AG04449 (cell line): ENCODE measurements at regions of chr1 and their contacts with region 1.

Region 1: DNA sequence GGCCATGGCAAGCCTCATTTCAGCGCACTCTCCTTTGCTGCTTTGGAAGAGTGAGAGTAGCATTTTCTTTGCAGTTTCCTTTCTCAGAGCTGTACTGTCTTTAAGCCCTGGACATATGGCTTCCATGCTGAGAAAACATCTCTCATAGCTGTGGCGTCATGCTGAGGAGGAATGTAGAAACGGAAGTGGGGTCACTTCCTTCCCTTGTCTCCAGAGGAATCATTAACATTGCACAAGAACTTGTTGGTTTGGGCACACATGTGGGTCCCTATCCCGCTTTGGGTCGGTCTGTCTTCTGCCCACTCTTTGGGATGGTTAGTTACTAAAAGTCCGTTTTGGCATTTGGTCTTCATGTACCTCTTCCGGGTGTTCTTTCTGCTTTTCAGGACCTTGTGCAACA is 5.6 kb downstream of the MFN2 start:
- DNase-seq: peak; percentile 70
- H3K4me3 ChIP-seq: no peak overlapping the region
- CTCF ChIP-seq: no peak

Region 2: DNA sequence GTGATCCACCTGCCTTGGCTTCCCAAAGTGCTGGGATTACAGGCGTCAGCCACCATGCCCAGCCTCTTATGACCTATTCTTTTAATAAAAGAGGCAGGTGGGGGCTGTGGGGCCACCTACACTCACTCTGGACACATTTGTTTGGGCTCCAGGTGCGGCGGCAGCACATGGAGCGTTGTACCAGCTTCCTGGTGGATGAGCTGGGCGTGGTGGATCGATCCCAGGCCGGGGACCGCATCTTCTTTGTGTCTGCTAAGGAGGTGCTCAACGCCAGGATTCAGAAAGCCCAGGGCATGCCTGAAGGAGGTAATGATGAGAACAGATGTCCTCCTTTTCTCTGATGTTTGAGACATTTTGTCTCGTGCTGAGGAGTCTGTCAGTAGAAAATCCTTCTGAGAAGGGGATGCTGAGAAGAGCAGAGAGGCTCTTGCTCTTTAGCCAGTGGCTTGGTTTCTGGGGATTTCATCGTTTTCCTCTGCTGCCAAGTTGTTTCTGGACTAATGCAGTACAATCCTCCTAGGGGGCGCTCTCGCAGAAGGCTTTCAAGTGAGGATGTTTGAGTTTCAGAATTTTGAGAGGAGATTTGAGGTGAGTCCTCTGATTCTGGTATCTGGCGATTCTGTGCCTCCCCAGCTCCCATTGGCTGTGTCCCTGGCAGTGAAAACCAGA is 15.5 kb after region 1 on chr1:
- CTCF ChIA-PET with region 1: interaction called, 25 read pairs
- POLR2A ChIA-PET with region 1: no interaction called
- DNase-seq: no peak
- H3K4me3 ChIP-seq: no peak overlapping the region
- CTCF ChIP-seq: peak; percentile 25